ENCODE measurements at regions of chr1 and their contacts with region 1.

Region 1: GRCh38 chr1:213939888-213940287 is 47.9 kb upstream of the PROX1 start:
- DNase-seq: no peak
- H3K4me3 ChIP-seq: no peak overlapping the region
- H3K27ac ChIP-seq: no peak overlapping the region
- H3K4me1 ChIP-seq: peaks cover 2% of the 10 kb centered on the region
- H3K27me3 ChIP-seq: peaks cover 34% of the 10 kb centered on the region
- CTCF ChIP-seq: no peak

Region 2: GRCh38 chr1:213858581-213858980 is 81.3 kb before region 1 on chr1:
- CTCF ChIA-PET with region 1: no interaction called
- dilution Hi-C with region 1: no loop called
- in situ Hi-C with region 1: no loop called
- intact Hi-C with region 1: no loop called
- DNase-seq: no peak
- H3K4me3 ChIP-seq: no peak overlapping the region
- H3K27ac ChIP-seq: no peak overlapping the region
- H3K4me1 ChIP-seq: no peaks in the 10 kb centered on the region
- H3K27me3 ChIP-seq: no peaks in the 10 kb centered on the region
- CTCF ChIP-seq: no peak

Region 3: DNA sequence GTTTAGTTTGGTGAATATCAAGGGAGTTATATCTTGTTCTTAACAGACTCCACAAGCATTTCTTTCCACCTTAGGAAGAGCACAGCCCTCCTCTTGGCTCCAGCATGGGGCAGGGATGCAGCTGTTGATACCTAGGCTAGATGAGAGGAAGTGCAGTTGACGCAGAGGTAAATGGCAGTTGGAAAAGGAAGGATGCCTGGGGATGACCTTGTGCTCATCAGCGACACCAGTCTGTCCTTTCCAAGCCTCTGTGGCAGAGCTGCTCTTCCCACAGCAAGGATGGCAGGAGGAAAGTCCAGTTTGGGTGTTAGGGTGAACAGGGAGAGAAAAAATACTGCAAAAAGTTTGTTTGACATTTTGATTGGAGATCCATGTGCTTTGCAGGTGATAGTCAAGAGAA is 54.0 kb after region 1 on chr1:
- CTCF ChIA-PET with region 1: no interaction called
- dilution Hi-C with region 1: loop called (anchors 5 kb)
- in situ Hi-C with region 1: no loop called
- intact Hi-C with region 1: no loop called
- DNase-seq: no peak
- H3K4me3 ChIP-seq: no peak overlapping the region
- H3K27ac ChIP-seq: no peak overlapping the region
- H3K4me1 ChIP-seq: peaks cover 6% of the 10 kb centered on the region
- H3K27me3 ChIP-seq: peaks cover 26% of the 10 kb centered on the region
- CTCF ChIP-seq: no peak